ENCODE measurements at regions of chr16 and their contacts with region 1.

Region 1: GRCh38 chr16:5071681-5072333 is at the start of gene ALG1:
- DNase-seq: peak; percentile 91 to 92 (median 92)
- ATAC-seq: peak; percentile 97
- H3K4me3 ChIP-seq: peak within 1 kb of the TSS; percentile 36 to 65
- H3K27ac ChIP-seq: peak within 1 kb of the TSS; percentile 61 to 76 (median 74)
- H3K4me1 ChIP-seq: peaks cover 21% of the 10 kb centered on the region
- H3K27me3 ChIP-seq: no peaks in the 10 kb centered on the region
- CTCF ChIP-seq: peak in 1 of 7 experiments; percentile 19
- POLR2A ChIP-seq: peak; percentile 74 to 92 (median 88)
- total RNA-seq, gene ALG1: 20.2 to 26.0 TPM

Region 2: GRCh38 chr16:4976079-4976478 is 95.7 kb before region 1 on chr16:
- intact Hi-C with region 1: loop called (anchors 10 kb)
- DNase-seq: no peak
- ATAC-seq: no peak
- H3K4me3 ChIP-seq: no peak overlapping the region
- H3K27ac ChIP-seq: peak overlapping the region; percentile 69 to 82 (median 74)
- H3K4me1 ChIP-seq: peaks cover 15% of the 10 kb centered on the region
- H3K27me3 ChIP-seq: no peaks in the 10 kb centered on the region
- CTCF ChIP-seq: no peak
- POLR2A ChIP-seq: no peak

Measured in body of pancreas (tissue), 4 donors.